HEK293T (cell line): ENCODE measurements at regions of chr2 and their contacts with region 1.

Region 1: DNA sequence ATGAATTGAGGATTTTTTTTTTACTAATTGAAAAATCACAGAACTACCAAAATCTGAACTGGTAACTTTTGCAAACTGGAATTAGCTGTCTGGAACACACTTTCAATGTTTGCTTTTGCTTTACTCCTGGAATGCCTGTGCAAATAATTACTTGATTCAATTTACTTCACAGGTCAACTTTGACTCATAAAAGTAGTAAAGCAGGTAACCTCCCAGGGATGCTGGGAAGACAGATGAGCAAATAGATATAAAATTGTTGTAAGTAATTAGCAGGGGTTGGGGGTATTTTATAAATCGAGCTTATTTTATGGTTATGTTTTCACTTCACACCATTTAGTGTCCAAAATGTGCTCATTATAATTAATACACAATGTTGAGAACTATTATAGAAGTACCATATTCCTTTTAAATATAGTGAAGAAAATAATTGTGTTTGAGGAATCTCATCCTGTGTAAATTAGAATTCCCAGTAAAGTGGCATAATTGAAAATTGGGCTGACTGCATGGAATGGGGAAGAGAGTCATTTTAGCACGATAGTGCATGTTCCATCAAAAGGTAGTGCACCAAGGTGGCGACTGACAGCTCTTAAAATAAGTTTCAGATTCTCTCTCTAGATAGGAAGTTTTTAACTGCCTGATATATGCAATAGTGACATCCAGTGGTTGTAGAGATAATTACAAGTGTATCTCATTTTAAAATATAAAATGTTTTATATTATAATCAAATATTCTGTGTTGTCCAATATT is 398.1 kb upstream of the HNRNPA3 start:
- DNase-seq: peak; percentile 22

Region 2: GRCh38 chr2:176187899-176188773 is 626.3 kb before region 1 on chr2 and contains the start of gene HOXD1:
- CTCF ChIA-PET with region 1: no interaction called
- POLR2A ChIA-PET with region 1: no interaction called
- DNase-seq: peak; percentile 81

Region 3: GRCh38 chr2:177148477-177149154 is 334.1 kb after region 1 on chr2:
- CTCF ChIA-PET with region 1: interaction called, 12 read pairs
- POLR2A ChIA-PET with region 1: no interaction called
- DNase-seq: peak; percentile 80